ENCODE measurements at regions of chr5 and their contacts with region 1.

Region 1: GRCh38 chr5:132490486-132491367 is at the start of gene IRF1:
- DNase-seq: peak; percentile 97
- ATAC-seq: peak; percentile 92 to 95
- total RNA-seq, gene IRF1: 11.8 to 21.4 TPM

Region 2: GRCh38 chr5:132410451-132411381 is 80.0 kb before region 1 on chr5:
- intact Hi-C with region 1: loop called in 1 of 2 experiments (anchors 5 kb)
- DNase-seq: peak; percentile 88
- ATAC-seq: peak; percentile 87 to 89

Region 3: GRCh38 chr5:132419502-132420468 is 70.9 kb before region 1 on chr5:
- intact Hi-C with region 1: loop called (anchors 2 to 5 kb)
- DNase-seq: peak; percentile 72
- ATAC-seq: peak; percentile 74 to 76

Measured in left cardiac atrium (tissue), 4 donors.